ENCODE measurements at regions of chr3 and their contacts with region 1.

Region 1: DNA sequence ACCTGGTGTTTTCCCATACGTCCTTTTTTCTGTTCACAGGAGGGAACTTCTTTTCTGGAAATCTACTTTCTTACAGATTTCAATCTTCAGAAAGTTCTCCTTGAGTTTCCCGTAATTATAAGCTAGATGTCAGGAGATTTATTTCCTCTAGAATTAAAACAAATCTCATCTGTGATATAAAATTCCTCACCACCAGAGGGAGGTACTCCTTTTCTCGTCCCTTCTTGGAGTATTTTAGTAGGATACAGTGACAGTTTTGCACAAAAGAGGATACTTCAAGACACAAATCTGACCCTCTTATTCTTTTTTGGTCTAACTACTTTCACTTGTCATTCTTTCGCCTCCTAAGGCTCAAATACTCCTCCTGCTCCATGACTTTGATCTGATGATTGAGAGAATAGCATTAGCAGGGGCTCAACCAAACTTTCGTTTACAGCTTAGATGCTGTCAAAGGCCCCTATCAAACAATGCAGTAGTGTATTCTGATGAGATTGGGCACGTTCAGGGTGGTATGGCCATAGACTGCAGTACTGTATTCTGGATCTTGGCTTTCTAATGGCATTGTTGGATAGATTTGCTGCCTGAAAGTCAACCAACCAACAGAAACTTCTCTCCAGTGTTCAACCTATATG is 38.0 kb downstream of the TMEM41A start:
- DNase-seq: peak; percentile 75
- ATAC-seq: peak; percentile 72
- H3K4me3 ChIP-seq: no peak overlapping the region
- H3K27ac ChIP-seq: no peak overlapping the region
- H3K4me1 ChIP-seq: no peaks in the 10 kb centered on the region
- H3K27me3 ChIP-seq: no peaks in the 10 kb centered on the region
- CTCF ChIP-seq: peak; percentile 83

Region 2: DNA sequence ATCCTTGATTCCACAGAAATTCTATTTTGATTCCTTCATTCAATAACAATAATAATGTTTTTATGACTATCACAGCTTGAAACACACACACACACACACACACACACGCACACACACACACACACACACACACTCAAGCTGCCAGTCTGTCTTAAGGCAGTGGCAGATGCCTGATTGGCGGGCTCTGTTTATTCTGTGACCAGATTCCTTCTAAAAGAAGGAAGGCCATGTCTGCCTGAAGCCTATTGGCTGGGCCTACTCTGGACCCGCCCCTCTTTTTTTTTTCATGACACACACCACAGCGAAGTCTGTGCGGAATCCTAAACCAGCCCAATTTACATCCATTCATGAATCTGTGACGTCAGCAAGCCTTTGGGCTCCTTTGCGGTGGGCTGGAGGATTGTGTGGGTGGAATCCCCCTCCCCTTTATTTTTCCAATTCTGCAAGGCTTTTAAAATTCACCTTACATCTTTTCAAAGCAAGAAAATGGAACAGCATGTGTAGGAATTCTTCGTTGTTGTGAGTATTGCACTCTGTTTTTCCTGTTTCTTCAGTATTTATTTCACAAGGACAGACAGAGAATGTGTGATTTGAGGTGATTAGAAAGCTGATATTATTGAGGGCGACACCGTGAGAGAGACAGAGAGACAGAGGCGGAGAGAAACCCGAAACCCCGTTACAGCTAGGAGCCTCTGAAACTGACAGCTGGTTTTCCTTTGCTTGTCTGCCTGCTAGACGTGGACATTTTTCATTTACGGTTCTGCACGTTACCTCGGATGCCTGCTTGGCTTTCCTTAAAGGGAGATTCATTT is 97.8 kb before region 1 on chr3 and contains the start of gene MAP3K13:
- CTCF ChIA-PET with region 1: interaction called, 3 read pairs
- POLR2A ChIA-PET with region 1: no interaction called
- intact Hi-C with region 1: loop called (anchors 5 kb)
- DNase-seq: peak; percentile 97
- ATAC-seq: peak; percentile 93
- H3K4me3 ChIP-seq: peak within 1 kb of the TSS; percentile 80
- H3K27ac ChIP-seq: peak within 1 kb of the TSS; percentile 20
- H3K4me1 ChIP-seq: peaks cover 47% of the 10 kb centered on the region
- H3K27me3 ChIP-seq: no peaks in the 10 kb centered on the region
- CTCF ChIP-seq: no peak
- total RNA-seq, gene MAP3K13: 24.0 and 24.4 TPM in 2 replicates

Region 3: DNA sequence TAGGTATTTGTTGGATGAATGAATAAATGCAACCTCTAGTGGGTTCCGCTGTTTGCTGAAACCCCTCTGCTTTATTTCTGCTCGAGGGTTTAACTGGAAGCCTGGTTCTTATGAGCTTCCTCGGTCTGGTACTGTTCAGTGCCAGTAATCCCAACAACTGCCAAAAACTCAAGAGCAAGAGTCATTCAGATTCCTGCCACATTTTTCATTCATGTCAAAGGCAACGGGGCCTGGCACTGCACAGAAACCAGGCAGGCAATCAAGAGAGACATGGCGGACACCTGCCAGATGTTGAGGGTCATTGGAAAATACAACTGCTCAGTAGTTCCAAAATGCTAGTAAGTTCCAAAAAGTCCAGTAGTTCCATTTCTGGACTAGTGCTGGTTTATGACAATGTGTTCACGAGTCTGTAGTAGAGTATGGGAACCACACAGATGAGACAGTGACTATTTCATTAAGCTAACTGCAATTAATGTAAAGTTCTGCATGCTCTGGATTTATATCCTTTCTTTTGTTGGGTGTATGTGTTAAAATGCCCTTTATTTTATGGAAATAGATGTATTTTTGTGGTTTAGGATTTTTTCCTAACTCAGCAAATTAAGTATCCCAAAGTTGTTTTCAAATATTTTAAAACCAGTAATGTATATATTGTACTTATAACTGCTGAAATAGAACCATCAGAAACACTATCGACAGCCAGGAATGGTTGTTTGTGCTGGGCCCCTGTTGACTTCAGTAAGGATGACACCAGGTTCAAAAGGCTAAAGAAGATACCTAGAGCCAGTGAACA is 60.7 kb after region 1 on chr3:
- CTCF ChIA-PET with region 1: interaction called, 14 read pairs
- POLR2A ChIA-PET with region 1: no interaction called
- intact Hi-C with region 1: no loop called
- DNase-seq: no peak
- ATAC-seq: no peak
- H3K4me3 ChIP-seq: no peak overlapping the region
- H3K27ac ChIP-seq: no peak overlapping the region
- H3K4me1 ChIP-seq: no peaks in the 10 kb centered on the region
- H3K27me3 ChIP-seq: no peaks in the 10 kb centered on the region
- CTCF ChIP-seq: no peak

Region 4: GRCh38 chr3:185558395-185558794 is 97.6 kb after region 1 on chr3:
- CTCF ChIA-PET with region 1: interaction called, 11 read pairs
- POLR2A ChIA-PET with region 1: interaction called, 3 read pairs
- intact Hi-C with region 1: loop called (anchors 1 kb)
- DNase-seq: peak; percentile 96
- ATAC-seq: peak; percentile 78
- H3K4me3 ChIP-seq: peak overlapping the region; percentile 67; the same call in 1 of the 2 replicates
- H3K27ac ChIP-seq: peak overlapping the region; percentile 87
- H3K4me1 ChIP-seq: peaks cover 31% of the 10 kb centered on the region
- H3K27me3 ChIP-seq: no peaks in the 10 kb centered on the region
- CTCF ChIP-seq: no peak

Region 5: DNA sequence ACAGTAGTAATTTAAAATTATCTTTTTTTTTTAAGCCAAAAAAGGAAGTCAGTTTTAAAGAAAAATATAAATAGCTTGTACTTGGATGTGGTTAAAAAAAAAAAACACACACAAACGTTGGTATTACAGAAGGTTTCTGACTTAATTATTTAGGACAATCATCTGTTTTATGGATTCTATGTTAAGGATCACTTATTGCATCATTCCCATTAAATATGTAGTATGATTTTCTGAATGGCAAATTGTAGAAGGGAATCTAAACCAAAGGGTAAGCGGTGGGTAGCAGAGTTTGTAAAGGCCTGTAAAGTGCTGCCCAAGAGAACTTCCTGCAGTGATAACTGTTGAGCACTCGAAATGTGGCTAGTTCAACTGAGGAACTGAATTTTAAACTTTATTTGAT is 133.2 kb after region 1 on chr3:
- CTCF ChIA-PET with region 1: no interaction called
- POLR2A ChIA-PET with region 1: interaction called, 14 read pairs
- intact Hi-C with region 1: no loop called
- DNase-seq: no peak
- ATAC-seq: no peak
- H3K4me3 ChIP-seq: no peak overlapping the region
- H3K27ac ChIP-seq: no peak overlapping the region
- H3K4me1 ChIP-seq: no peaks in the 10 kb centered on the region
- H3K27me3 ChIP-seq: no peaks in the 10 kb centered on the region
- CTCF ChIP-seq: no peak

Region 6: DNA sequence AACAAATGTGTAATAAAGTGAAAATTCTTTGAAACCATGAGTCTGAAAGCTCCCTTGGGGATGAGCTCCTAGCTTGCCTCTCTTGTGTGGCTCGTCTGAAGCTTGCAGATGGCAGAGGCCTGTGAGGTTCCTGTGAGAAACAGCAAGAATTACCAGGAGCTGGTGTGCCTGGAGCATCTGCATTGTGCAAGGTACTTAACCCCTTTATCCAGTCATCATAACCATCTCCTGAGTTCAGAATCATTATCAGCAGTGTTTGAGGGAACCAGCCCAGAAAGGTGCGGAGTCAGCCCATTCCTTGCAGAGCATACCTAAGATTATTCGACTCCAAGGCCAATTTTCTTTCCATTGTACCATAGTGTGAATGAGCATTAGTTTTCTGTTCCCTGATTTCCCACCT is 528.7 kb after region 1 on chr3:
- CTCF ChIA-PET with region 1: no interaction called
- POLR2A ChIA-PET with region 1: interaction called, 29 read pairs
- intact Hi-C with region 1: no loop called
- DNase-seq: no peak
- ATAC-seq: no peak
- H3K4me3 ChIP-seq: no peak overlapping the region
- H3K27ac ChIP-seq: no peak overlapping the region
- H3K4me1 ChIP-seq: no peaks in the 10 kb centered on the region
- H3K27me3 ChIP-seq: no peaks in the 10 kb centered on the region
- CTCF ChIP-seq: no peak